ENCODE measurements at regions of chr17 and their contacts with region 1.

Region 1: GRCh38 chr17:30278032-30278431 is 13.7 kb downstream of the BLMH start:
- DNase-seq: peak; percentile 25
- ATAC-seq: peak; percentile 71 to 84

Region 2: GRCh38 chr17:30104575-30105339 is 173.3 kb before region 1 on chr17:
- intact Hi-C with region 1: loop called in 1 of 2 experiments (anchors 5 kb)
- DNase-seq: peak; percentile 82
- ATAC-seq: peak; percentile 97 to 99

Region 3: DNA sequence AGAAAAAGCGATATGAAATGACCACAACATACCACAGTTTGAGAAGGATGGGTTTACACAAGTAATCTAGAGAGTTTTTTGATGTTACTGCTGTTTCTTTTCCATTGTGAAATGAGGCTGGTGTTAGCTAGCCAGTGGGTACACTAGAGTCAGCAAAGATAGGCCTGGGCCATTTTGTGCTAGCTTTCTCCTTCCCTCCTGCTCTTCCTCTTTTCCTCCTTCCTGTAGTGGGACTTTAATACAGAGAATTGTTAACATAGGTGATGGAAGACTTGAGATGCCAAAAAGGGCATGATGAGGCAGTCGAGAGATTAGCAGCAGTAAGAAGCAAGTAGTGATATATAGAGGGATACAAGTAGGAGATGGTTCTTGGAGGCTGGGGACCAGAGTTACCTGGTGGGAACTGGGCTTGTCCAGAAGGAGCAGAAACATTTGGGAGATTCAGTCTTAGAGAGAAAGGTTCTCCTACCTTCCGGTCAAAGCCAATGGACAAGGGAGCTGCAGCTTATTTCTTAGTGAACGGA is 153.7 kb before region 1 on chr17:
- intact Hi-C with region 1: loop called in 1 of 2 experiments (anchors 10 kb)
- DNase-seq: no peak
- ATAC-seq: peak in 1 of 2 donors; percentile 26

Region 4: DNA sequence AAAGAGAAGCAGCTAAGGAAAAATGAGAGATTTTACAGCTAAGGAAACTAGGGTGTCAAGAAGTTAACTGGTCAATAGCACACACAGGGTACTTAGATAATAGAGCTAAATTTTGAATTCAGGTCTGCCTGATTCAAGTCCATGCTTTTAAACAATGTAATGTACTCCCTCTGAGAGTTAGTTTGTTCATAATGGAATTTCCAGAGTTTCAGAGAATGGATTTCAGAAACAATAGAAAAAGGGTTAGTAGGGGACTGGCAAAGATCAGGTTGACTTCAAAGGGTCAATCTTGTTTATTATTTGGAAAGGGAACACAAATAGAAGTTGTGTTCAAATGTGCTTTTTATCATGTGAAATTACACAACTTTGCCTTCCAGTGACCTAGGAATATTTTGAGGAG is 143.5 kb before region 1 on chr17:
- intact Hi-C with region 1: loop called (anchors 5 to 10 kb)
- DNase-seq: no peak
- ATAC-seq: no peak

Region 5: GRCh38 chr17:30226878-30227277 is 51.2 kb before region 1 on chr17:
- intact Hi-C with region 1: no loop called
- DNase-seq: no peak
- ATAC-seq: no peak

Measured in left cardiac atrium (tissue), 4 donors.